ENCODE measurements at regions of chr3 and their contacts with region 1.

Region 1: GRCh38 chr3:58731673-58732072 is 65.1 kb upstream of the FAM3D start:
- DNase-seq: no peak
- H3K4me3 ChIP-seq: no peak overlapping the region
- H3K27ac ChIP-seq: no peak overlapping the region
- H3K4me1 ChIP-seq: no peaks in the 10 kb centered on the region
- H3K27me3 ChIP-seq: no peaks in the 10 kb centered on the region
- CTCF ChIP-seq: no peak
- EP300 ChIP-seq: no peak
- POLR2A ChIP-seq: no peak
- RAD21 ChIP-seq: no peak

Region 2: DNA sequence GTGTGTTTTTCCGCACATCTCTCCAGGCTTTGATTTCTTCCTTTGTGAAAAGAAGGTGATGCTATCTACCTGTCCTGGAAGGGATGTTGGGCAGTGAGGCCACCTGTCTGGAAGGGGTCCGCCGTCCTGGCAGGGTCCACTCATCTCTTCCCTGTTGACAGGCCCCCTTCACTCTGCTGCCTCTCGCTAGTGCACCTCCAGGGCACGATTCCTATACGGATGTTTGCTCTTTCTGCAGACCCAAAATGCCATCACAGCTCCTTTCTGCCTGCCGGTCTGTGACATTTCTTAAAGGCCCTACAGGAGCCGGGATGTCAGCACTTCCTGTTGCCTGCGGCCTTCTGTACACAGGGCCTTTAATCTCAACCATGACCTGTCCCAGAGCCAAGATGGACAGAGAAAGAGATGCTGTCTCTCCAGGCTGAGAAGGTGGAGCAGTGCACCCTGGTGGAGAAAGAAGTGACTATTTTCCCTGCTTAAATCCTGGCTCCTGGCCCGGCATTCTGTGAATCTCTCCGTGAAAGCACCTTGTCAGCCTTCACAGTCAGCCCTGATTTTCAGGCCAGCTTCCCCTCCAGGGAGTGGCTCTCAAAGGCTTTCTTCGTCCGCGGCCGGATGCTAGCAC is 72.5 kb before region 1 on chr3:
- CTCF ChIA-PET with region 1: interaction called, 12 read pairs
- POLR2A ChIA-PET with region 1: no interaction called
- DNase-seq: peak; percentile 25 to 55
- H3K4me3 ChIP-seq: no peak overlapping the region
- H3K27ac ChIP-seq: no peak overlapping the region
- H3K4me1 ChIP-seq: no peaks in the 10 kb centered on the region
- H3K27me3 ChIP-seq: no peaks in the 10 kb centered on the region
- CTCF ChIP-seq: peak; percentile 52 to 77 (median 66)
- EP300 ChIP-seq: no peak
- POLR2A ChIP-seq: no peak
- RAD21 ChIP-seq: peak; percentile 67 to 75

Region 3: DNA sequence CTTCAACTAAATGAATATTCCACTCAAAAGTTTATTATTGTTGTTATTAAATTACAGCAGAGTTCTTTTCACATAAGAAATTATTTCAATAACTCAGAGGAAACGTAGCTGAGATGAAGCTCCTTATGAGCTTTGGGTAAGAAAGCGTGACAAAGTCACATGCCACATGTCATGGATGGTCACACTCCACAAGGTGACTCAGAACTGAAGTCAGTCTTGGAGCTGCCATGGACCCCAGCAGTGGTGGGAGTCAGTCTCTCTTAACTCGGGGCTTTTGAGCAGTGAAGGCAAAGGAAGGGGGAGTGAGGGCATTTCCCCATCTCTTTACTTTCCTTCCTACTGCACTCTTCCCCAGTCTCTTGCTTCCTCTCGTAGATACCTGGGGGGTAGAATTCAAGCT is 22.4 kb after region 1 on chr3:
- CTCF ChIA-PET with region 1: no interaction called
- POLR2A ChIA-PET with region 1: no interaction called
- DNase-seq: no peak
- H3K4me3 ChIP-seq: no peak overlapping the region
- H3K27ac ChIP-seq: no peak overlapping the region
- H3K4me1 ChIP-seq: no peaks in the 10 kb centered on the region
- H3K27me3 ChIP-seq: no peaks in the 10 kb centered on the region
- CTCF ChIP-seq: no peak
- EP300 ChIP-seq: no peak
- POLR2A ChIP-seq: no peak
- RAD21 ChIP-seq: no peak